A549 (cell line): ENCODE measurements at regions of chr21 and their contacts with region 1.

Region 1: DNA sequence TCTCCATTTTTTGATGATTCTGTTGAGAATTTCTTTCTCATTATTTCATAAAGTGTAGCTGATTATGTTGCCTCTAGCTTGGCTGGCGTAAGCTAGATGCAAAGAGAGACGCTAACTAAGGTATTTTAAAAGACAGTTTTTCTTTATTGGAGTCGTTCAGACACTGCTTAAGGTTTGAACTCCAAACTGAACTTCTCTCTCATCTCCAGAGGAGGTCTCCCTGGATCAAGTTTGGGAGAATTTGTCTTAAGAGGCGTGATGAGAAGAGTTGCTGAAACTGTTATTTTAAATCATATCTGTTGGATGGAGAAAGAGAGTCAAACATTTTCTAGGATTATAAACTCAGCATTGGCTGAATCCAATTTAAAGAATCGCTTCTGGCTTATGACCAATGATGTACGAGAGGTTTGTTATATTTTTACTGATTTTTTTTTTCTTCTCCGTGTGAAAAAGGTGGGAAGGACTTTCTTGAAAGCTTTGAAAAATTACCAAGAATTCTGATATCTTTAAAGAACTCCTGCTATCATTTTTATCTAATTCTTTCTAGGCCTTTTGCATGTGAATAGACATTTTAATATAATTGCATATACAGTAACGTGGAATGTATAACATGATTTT is 34.0 kb downstream of the MAP3K7CL start:
- DNase-seq: peak; percentile 15 to 78
- ATAC-seq: peak; percentile 85 to 87
- H3K4me3 ChIP-seq: no peak overlapping the region
- H3K27ac ChIP-seq: no peak overlapping the region
- H3K4me1 ChIP-seq: peaks cover 12% of the 10 kb centered on the region
- CTCF ChIP-seq: peak; percentile 75
- EP300 ChIP-seq: no peak
- POLR2A ChIP-seq: no peak
- RAD21 ChIP-seq: peak; percentile 90

Region 2: GRCh38 chr21:29145354-29145782 is 19.1 kb before region 1 on chr21:
- CTCF ChIA-PET with region 1: interaction called, 21 read pairs
- POLR2A ChIA-PET with region 1: no interaction called
- DNase-seq: peak; percentile 3 to 17
- ATAC-seq: peak; percentile 34 to 60; a peak in 2 of 6 replicates
- H3K4me3 ChIP-seq: no peak overlapping the region
- H3K27ac ChIP-seq: no peak overlapping the region
- H3K4me1 ChIP-seq: peaks cover 11% of the 10 kb centered on the region; the same call in 2 of the 3 replicates
- CTCF ChIP-seq: no peak
- EP300 ChIP-seq: no peak
- POLR2A ChIP-seq: no peak
- RAD21 ChIP-seq: no peak

Region 3: GRCh38 chr21:29187944-29188343 is 23.5 kb after region 1 on chr21:
- CTCF ChIA-PET with region 1: interaction called, 12 read pairs
- POLR2A ChIA-PET with region 1: no interaction called
- DNase-seq: peak in 1 of 2 experiments; percentile 65
- ATAC-seq: peak; percentile 73 to 81
- H3K4me3 ChIP-seq: no peak overlapping the region
- H3K27ac ChIP-seq: peak overlapping the region; percentile 53 to 77; a peak in 5 of 6 replicates
- H3K4me1 ChIP-seq: peaks cover 52% of the 10 kb centered on the region
- CTCF ChIP-seq: no peak
- EP300 ChIP-seq: no peak
- POLR2A ChIP-seq: no peak
- RAD21 ChIP-seq: no peak

Region 4: GRCh38 chr21:29351691-29352090 is 187.3 kb after region 1 on chr21:
- CTCF ChIA-PET with region 1: interaction called, 59 read pairs
- POLR2A ChIA-PET with region 1: interaction called, 3 read pairs
- DNase-seq: no peak
- ATAC-seq: no peak
- H3K4me3 ChIP-seq: no peak overlapping the region
- H3K27ac ChIP-seq: no peak overlapping the region
- H3K4me1 ChIP-seq: no peaks in the 10 kb centered on the region
- CTCF ChIP-seq: no peak
- EP300 ChIP-seq: no peak
- POLR2A ChIP-seq: no peak
- RAD21 ChIP-seq: no peak

Region 5: DNA sequence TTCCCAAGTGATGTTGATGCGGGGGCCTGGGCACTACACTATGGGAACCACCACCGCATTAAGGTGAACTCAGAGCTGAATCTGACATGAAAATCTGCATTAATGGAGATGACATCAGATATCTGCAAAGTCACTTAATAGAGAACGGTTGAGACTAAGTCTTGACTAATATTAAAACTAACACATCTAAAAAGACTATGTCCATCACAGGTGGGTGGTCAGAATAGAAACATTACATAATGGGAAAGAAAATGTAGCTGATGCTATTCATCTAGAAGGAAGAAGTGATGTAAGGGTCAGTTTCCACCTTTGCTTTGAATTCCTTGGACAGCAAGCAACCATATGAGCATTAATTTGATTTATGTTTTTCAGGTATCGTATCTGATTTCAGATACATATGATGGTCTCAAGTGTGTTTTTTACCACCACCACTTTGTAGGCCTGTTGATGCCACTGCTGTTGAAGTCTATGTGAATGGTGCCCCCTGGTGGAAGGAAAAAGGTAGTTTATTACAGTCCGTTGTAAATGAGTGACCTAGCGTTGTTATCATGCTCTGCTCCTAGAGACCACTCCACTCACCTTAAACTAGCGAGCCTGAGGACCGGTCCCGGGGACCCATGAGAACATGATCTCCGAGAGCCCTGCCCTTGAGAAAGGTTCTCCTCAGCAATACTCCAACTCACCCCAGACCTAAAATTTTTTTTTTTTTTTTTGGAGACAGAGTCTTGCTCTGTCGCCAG is 207.8 kb after region 1 on chr21:
- CTCF ChIA-PET with region 1: interaction called, 32 read pairs
- POLR2A ChIA-PET with region 1: no interaction called
- DNase-seq: peak; percentile 50 to 75
- ATAC-seq: peak; percentile 95 to 97
- H3K4me3 ChIP-seq: no peak overlapping the region
- H3K27ac ChIP-seq: no peak overlapping the region
- H3K4me1 ChIP-seq: no peaks in the 10 kb centered on the region
- CTCF ChIP-seq: peak; percentile 59
- EP300 ChIP-seq: no peak
- POLR2A ChIP-seq: no peak
- RAD21 ChIP-seq: peak; percentile 72 to 79